Caco-2 (cell line): ENCODE measurements at regions of chr7 and their contacts with region 1.

Region 1: DNA sequence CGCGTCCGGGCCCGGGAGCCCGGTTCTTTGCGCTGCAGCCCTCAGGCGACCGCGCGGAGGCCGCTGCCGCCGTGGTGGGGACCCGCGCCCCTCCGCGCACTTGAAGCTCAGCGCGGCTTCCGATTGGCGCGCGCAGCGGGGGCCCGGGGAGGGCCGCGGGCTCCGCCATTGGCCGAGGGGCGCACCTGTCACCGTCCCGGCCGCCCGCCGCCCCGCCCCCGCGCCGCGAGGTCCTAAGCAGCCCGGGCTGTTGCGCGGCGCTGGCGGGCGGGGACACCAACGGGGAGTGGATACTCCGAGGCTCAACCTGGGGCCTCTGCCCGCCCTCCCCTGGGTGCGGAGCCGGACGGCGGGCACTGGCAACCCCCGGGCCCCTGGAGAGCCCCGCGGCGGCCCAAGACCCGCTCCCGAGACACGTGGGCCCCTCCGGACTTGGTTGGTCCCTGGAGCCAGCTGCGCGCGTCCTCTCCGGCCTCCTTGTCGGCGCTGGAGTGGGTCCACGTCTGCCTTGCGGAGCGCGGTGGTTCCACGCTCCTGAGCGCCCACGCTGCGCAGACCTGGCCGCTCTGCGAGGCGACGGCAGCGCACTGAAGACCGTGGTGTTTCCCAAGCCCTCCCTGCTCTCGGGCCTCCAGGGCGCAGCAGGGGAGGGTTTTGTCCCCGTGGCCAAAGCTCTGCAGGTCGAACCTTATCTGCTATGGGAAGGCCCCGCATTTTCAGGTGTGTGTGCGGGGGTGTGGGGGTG is at the start of gene MNX1:
- DNase-seq: peak; percentile 93 to 97
- H3K4me3 ChIP-seq: peak within 1 kb of the TSS; percentile 89
- H3K4me3 Mint-ChIP-seq: peak within 1 kb of the TSS; percentile 97
- H3K27ac Mint-ChIP-seq: peak within 1 kb of the TSS; percentile 91
- H3K4me1 ChIP-seq: peaks cover 40% of the 10 kb centered on the region
- H3K4me1 Mint-ChIP-seq: peaks cover 25% of the 10 kb centered on the region
- H3K27me3 ChIP-seq: no peaks in the 10 kb centered on the region
- H3K27me3 Mint-ChIP-seq: no peaks in the 10 kb centered on the region
- CTCF ChIP-seq: no peak
- total RNA-seq, gene MNX1: 34.0 and 36.5 TPM in 2 replicates

Region 2: DNA sequence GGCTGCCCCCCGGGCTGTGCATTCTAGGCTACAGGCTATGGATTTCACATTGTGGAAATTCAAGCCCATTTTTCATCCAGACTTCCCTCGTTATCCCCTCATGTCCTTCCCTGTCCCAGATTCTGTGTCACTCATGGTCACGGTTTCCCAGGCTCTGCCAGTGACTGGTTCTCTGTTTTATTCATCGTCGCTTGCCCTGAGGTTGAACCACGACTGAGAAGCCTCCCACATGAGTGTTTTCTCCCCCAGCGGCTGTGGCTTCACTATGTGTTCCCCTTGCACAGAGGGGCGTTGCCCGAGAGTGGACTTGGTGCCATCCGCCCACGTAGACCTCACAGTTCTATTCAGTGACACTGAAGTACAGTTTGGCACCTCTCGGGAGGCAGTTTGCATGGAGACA is 47.3 kb before region 1 on chr7:
- CTCF ChIA-PET with region 1: no interaction called
- POLR2A ChIA-PET with region 1: no interaction called
- intact Hi-C with region 1: no loop called
- DNase-seq: no peak
- H3K4me3 ChIP-seq: no peak overlapping the region
- H3K4me3 Mint-ChIP-seq: no peak overlapping the region
- H3K27ac Mint-ChIP-seq: no peak overlapping the region
- H3K4me1 ChIP-seq: no peaks in the 10 kb centered on the region
- H3K4me1 Mint-ChIP-seq: no peaks in the 10 kb centered on the region
- H3K27me3 ChIP-seq: no peaks in the 10 kb centered on the region
- H3K27me3 Mint-ChIP-seq: no peaks in the 10 kb centered on the region
- CTCF ChIP-seq: no peak

Region 3: DNA sequence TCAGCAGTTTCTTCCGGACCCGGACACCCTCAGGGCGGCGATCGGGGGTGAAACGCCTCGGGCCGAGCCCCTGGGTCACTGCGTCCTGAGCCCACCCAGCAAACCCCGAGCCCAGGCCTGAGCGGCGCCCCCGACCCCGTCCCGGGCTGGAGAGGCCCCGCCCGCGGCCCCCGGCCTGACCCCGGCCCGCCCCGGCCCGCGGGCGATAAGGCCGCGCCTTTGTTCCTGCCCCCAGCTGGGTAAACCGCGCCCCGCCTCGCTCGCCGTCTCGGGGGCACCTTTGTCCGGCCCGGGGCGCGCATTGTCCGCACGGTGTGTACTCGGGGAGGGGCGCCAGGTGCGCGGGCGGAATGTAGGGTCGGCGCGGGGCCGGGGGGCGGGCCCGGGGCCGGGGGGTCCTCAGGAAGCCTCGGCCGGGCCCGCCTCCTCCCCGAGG is 11.1 kb before region 1 on chr7:
- CTCF ChIA-PET with region 1: no interaction called
- POLR2A ChIA-PET with region 1: no interaction called
- intact Hi-C with region 1: loop called (anchors 1 kb)
- DNase-seq: peak; percentile 78 to 84
- H3K4me3 ChIP-seq: peak overlapping the region; percentile 66
- H3K4me3 Mint-ChIP-seq: peak overlapping the region; percentile 73
- H3K27ac Mint-ChIP-seq: peak overlapping the region; percentile 83
- H3K4me1 ChIP-seq: peaks cover 13% of the 10 kb centered on the region
- H3K4me1 Mint-ChIP-seq: peaks cover 6% of the 10 kb centered on the region
- H3K27me3 ChIP-seq: no peaks in the 10 kb centered on the region
- H3K27me3 Mint-ChIP-seq: no peaks in the 10 kb centered on the region
- CTCF ChIP-seq: no peak

Region 4: GRCh38 chr7:157041004-157041403 is 30.2 kb after region 1 on chr7:
- CTCF ChIA-PET with region 1: no interaction called
- POLR2A ChIA-PET with region 1: interaction called, 4 read pairs
- intact Hi-C with region 1: loop called (anchors 2 kb)
- DNase-seq: peak in 1 of 2 experiments; percentile 53
- H3K4me3 ChIP-seq: no peak overlapping the region
- H3K4me3 Mint-ChIP-seq: peak overlapping the region; percentile 40
- H3K27ac Mint-ChIP-seq: peak overlapping the region; percentile 19
- H3K4me1 ChIP-seq: peaks cover 15% of the 10 kb centered on the region
- H3K4me1 Mint-ChIP-seq: peaks cover 10% of the 10 kb centered on the region
- H3K27me3 ChIP-seq: no peaks in the 10 kb centered on the region
- H3K27me3 Mint-ChIP-seq: no peaks in the 10 kb centered on the region
- CTCF ChIP-seq: no peak

Region 5: DNA sequence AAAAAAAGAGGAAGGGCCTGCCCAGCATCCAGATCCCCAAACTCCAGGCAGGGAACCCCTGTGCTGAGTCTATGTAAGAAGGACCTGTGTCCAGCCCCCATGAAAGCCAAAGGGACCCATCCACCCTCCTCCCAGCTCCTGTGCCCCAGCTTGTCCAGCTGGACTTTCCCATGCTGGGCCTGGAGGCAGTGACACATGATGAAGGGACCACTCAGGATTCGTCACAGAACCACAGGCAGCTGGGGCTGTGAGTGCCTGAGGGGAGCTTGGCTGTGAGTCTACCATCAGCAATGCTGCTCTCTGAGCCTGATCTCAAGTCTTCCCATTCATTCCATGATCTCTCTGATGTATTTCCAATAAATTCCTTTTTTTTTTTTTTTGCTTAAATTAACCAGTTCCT is 35.9 kb after region 1 on chr7:
- CTCF ChIA-PET with region 1: interaction called, 3 read pairs
- POLR2A ChIA-PET with region 1: no interaction called
- intact Hi-C with region 1: loop called (anchors 1 kb)
- DNase-seq: no peak
- H3K4me3 ChIP-seq: no peak overlapping the region
- H3K4me3 Mint-ChIP-seq: no peak overlapping the region
- H3K27ac Mint-ChIP-seq: no peak overlapping the region
- H3K4me1 ChIP-seq: peaks cover 9% of the 10 kb centered on the region
- H3K4me1 Mint-ChIP-seq: peaks cover 7% of the 10 kb centered on the region
- H3K27me3 ChIP-seq: no peaks in the 10 kb centered on the region
- H3K27me3 Mint-ChIP-seq: no peaks in the 10 kb centered on the region
- CTCF ChIP-seq: no peak

Region 6: GRCh38 chr7:157078081-157078611 is 67.4 kb after region 1 on chr7:
- CTCF ChIA-PET with region 1: no interaction called
- POLR2A ChIA-PET with region 1: no interaction called
- intact Hi-C with region 1: no loop called
- DNase-seq: no peak
- H3K4me3 ChIP-seq: no peak overlapping the region
- H3K4me3 Mint-ChIP-seq: no peak overlapping the region
- H3K27ac Mint-ChIP-seq: no peak overlapping the region
- H3K4me1 ChIP-seq: no peaks in the 10 kb centered on the region
- H3K4me1 Mint-ChIP-seq: no peaks in the 10 kb centered on the region
- H3K27me3 ChIP-seq: peaks cover 1% of the 10 kb centered on the region; the same call in 1 of the 2 replicates
- H3K27me3 Mint-ChIP-seq: no peaks in the 10 kb centered on the region
- CTCF ChIP-seq: no peak

Region 7: GRCh38 chr7:157138424-157139110 is 127.8 kb after region 1 on chr7 and contains the start of gene UBE3C:
- CTCF ChIA-PET with region 1: interaction called, 7 read pairs
- POLR2A ChIA-PET with region 1: interaction called, 3 read pairs
- intact Hi-C with region 1: loop called (anchors 2 kb)
- DNase-seq: peak; percentile 89 to 95
- H3K4me3 ChIP-seq: peak within 1 kb of the TSS; percentile 79
- H3K4me3 Mint-ChIP-seq: peak within 1 kb of the TSS; percentile 73
- H3K27ac Mint-ChIP-seq: peak within 1 kb of the TSS; percentile 39
- H3K4me1 ChIP-seq: peaks cover 10% of the 10 kb centered on the region
- H3K4me1 Mint-ChIP-seq: peaks cover 24% of the 10 kb centered on the region
- H3K27me3 ChIP-seq: no peaks in the 10 kb centered on the region
- H3K27me3 Mint-ChIP-seq: no peaks in the 10 kb centered on the region
- CTCF ChIP-seq: no peak
- total RNA-seq, gene UBE3C: 76.1 and 78.8 TPM in 2 replicates